ENCODE measurements at regions of chr2 and their contacts with region 1.

Region 1: GRCh38 chr2:46117379-46117778 is 179.8 kb upstream of the EPAS1 start:
- DNase-seq: peak; percentile 52
- H3K4me3 ChIP-seq: no peak overlapping the region
- H3K27ac ChIP-seq: peak overlapping the region; percentile 78
- H3K4me1 ChIP-seq: peaks cover 51% of the 10 kb centered on the region
- H3K27me3 ChIP-seq: no peaks in the 10 kb centered on the region
- CTCF ChIP-seq: no peak
- POLR2A ChIP-seq: no peak

Region 2: GRCh38 chr2:46097714-46098480 is 19.5 kb before region 1 on chr2:
- CTCF ChIA-PET with region 1: interaction called, 8 read pairs
- POLR2A ChIA-PET with region 1: no interaction called
- dilution Hi-C with region 1: no loop called
- intact Hi-C with region 1: loop called (anchors 1 kb)
- DNase-seq: peak; percentile 96
- H3K4me3 ChIP-seq: no peak overlapping the region
- H3K27ac ChIP-seq: peak overlapping the region; percentile 95
- H3K4me1 ChIP-seq: peaks cover 17% of the 10 kb centered on the region
- H3K27me3 ChIP-seq: no peaks in the 10 kb centered on the region
- CTCF ChIP-seq: no peak
- POLR2A ChIP-seq: no peak

Region 3: DNA sequence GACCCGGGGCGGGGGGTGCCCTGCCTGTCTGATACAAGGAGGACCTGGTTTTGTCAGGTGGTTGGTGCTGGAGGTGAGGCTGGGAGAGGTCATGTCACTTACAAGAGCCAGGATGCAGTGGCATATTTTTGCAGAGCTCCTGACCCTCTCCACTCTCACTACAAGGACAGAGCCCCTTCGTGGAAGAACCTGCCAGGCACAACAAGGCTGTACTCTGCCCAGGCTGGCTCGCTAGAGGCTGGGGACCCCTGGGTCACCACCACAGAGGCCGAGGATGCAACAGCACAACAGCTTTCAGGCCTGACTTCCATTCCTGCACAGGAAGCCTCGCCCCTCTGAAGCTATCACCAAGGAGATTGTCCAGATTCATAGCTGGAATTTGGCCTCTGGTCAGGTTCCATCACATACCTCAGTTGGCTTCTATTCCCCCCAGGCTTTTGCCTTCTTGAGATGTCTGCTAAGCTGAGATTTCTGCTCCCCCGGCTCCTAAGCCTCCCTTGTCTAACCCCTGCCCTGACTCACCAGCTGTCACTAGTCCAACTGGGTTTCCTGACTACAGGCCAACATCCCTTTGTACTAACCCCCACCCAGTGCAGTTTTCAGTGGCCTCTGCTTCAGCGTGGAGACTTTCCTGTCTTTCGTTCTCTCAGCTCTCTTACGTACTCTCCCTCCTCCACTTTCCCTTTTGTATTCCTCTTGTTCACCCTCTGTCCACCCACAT is 47.4 kb after region 1 on chr2:
- CTCF ChIA-PET with region 1: no interaction called
- POLR2A ChIA-PET with region 1: no interaction called
- dilution Hi-C with region 1: no loop called
- intact Hi-C with region 1: loop called (anchors 2 kb)
- DNase-seq: peak; percentile 94
- H3K4me3 ChIP-seq: no peak overlapping the region
- H3K27ac ChIP-seq: peak overlapping the region; percentile 21
- H3K4me1 ChIP-seq: peaks cover 18% of the 10 kb centered on the region
- H3K27me3 ChIP-seq: no peaks in the 10 kb centered on the region
- CTCF ChIP-seq: no peak
- POLR2A ChIP-seq: peak; percentile 57

Measured in endothelial cell of umbilical vein (primary cell).